CD4-positive, alpha-beta memory T cell (primary cell): ENCODE measurements at regions of chr1 and their contacts with region 1.

Region 1: DNA sequence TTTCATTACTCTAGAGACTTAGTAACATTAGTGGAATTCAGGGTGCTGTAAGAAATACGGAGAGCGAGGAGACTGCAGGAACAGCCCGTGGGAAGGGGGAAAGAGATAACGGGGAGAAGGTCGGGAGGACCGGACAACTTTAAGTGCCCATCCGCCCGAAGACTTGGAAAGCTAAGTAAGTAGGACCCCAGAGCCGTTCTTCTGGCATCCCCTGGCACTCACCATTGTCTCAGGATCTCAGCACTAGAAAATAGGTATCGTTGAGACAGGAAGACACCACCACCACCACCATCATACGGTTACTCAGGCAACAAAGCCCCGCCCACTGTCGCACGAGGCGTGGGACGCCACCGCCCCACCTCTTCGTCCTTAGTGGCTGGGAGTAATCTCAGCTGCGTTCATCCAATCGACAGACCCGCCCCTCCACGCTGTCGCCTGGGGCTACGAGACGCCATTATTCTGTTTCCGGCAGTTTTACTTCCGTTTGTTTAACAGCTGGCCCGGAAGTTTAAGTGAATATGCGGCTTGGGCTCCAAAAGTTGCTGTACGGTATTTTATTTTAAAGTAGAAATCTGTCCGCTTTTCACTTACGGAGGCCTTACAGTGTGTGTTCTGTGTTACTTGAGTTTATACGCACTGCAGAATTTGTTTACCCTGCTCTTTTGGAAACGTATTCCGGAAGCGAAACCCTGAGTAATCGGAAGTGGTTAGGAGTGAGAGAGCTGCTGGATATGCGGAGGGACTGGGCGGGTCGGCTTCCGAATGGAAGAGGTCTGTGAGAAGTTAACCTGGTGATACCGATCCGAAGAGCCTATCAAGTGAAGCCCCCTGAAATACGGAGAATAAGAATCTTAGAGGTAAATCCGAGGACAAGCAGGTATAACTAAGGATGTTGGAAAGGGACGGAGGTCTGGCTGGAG is at the starts of genes BLZF1 and NME7:
- DNase-seq: peak; percentile 95 to 99 (median 98)
- H3K4me3 ChIP-seq: peak within 1 kb of the TSS; percentile 96
- H3K4me3 Mint-ChIP-seq: peak within 1 kb of the TSS in 3 of 8 donors; percentile 16 to 51 (median 24)
- H3K27ac ChIP-seq: peak within 1 kb of the TSS; percentile 71
- H3K27ac Mint-ChIP-seq: peak within 1 kb of the TSS in 3 of 7 donors; percentile 25 to 54 (median 33)
- H3K4me1 ChIP-seq: peaks cover 44% of the 10 kb centered on the region
- H3K4me1 Mint-ChIP-seq: peaks cover 22 to 31% (median 23%) of the 10 kb centered on the region in 4 donors
- H3K27me3 ChIP-seq: no peaks in the 10 kb centered on the region
- H3K27me3 Mint-ChIP-seq: no peaks in the 10 kb centered on the region
- total RNA-seq, gene BLZF1: 20.0 to 23.8 TPM
- total RNA-seq, gene NME7: 12.0 to 14.3 TPM

Region 2: DNA sequence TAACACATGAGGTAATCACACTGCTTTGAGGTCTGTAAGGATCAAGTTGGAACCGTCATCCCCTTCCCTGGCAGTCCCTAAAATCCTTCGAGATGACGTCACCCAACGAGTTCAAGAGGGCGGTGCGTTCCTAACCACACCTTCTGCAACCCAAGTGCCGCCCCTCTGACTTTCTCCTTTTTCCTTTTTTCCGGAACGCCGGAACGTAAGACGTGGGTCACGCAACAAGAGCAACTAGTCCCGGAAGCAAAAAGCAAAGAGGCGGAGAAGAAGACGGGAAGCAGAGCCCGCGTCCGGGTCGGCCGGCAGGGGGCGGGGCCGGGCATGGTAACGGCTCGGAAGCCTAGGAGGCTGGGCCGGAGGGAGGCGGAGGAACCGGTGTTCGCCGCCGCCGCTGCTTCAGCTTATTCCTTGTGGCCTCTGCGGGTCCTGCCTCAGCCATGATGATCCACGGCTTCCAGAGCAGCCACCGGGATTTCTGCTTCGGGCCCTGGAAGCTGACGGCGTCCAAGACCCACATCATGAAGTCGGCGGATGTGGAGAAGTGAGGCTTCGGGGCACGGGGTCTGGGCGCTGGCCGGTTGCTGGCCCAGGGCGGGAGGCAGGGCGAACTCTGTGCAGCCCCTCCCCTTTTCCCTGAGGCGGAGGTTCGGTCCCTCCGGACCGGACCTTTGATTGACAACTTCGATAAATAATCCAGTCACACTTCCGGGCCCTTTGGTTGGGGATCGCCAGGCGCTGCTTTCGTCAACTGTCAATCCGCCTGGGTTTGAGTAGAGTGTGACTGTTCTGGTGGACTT is 1188.9 kb before region 1 on chr1 and contains the start of gene TIPRL:
- CTCF ChIA-PET with region 1: no interaction called
- POLR2A ChIA-PET with region 1: no interaction called
- intact Hi-C with region 1: loop called (anchors 1 kb)
- DNase-seq: peak; percentile 93 to 94 (median 94)
- H3K4me3 ChIP-seq: peak within 1 kb of the TSS; percentile 86 to 99
- H3K4me3 Mint-ChIP-seq: peak within 1 kb of the TSS in 2 of 8 donors; percentile 18 to 26
- H3K27ac ChIP-seq: peak within 1 kb of the TSS; percentile 95
- H3K27ac Mint-ChIP-seq: no peak within 1 kb of the TSS
- H3K4me1 ChIP-seq: peaks cover 24% of the 10 kb centered on the region
- H3K4me1 Mint-ChIP-seq: peaks cover 3 to 17% (median 9%) of the 10 kb centered on the region in 4 donors
- H3K27me3 ChIP-seq: no peaks in the 10 kb centered on the region
- H3K27me3 Mint-ChIP-seq: no peaks in the 10 kb centered on the region
- total RNA-seq, gene TIPRL: 23.8 to 28.3 TPM

Region 3: DNA sequence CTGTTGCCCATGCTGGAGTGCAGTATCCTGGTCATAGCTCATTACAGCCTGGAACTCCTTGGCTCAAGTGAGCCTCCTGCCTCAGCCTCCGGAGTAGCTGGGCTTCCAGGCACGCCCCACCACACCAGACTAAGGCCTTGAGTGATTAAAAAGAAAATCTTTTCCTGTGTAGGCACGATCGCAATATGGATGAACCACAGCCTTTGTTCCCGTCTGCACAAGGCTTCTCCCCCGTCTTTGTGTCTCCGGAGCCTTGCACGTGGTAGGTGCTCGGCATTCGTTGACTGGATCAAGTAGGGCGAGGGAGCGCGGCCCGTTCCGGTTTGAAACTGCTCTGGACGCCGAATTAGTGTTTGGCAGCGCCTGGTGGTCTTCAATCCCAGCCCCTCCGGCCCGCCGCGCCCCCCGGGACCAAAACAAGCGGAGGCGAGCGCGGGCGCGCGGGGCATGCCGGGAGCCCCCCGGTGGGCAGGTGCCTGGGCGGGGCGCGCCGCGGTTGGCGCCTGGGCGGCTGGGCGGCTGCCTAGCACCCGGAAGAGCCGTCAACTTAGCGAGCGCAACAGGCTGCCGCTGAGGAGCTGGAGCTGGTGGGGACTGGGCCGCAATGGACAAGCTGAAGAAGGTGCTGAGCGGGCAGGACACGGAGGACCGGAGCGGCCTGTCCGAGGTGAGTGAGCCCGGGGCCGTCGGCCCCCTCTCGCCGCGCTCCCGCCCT is 1142.1 kb before region 1 on chr1 and contains the start of gene SFT2D2:
- CTCF ChIA-PET with region 1: no interaction called
- POLR2A ChIA-PET with region 1: interaction called, 9 read pairs
- intact Hi-C with region 1: loop called (anchors 5 kb)
- DNase-seq: peak; percentile 78 to 85 (median 81)
- H3K4me3 ChIP-seq: peak within 1 kb of the TSS; percentile 70 to 84
- H3K4me3 Mint-ChIP-seq: peak within 1 kb of the TSS; percentile 95 to 98 (median 96)
- H3K27ac ChIP-seq: peak within 1 kb of the TSS; percentile 80
- H3K27ac Mint-ChIP-seq: peak within 1 kb of the TSS; percentile 87 to 98 (median 96)
- H3K4me1 ChIP-seq: peaks cover 31% of the 10 kb centered on the region
- H3K4me1 Mint-ChIP-seq: peaks cover 25 to 48% (median 38%) of the 10 kb centered on the region in 4 donors
- H3K27me3 ChIP-seq: no peaks in the 10 kb centered on the region
- H3K27me3 Mint-ChIP-seq: peaks cover 2% of the 10 kb centered on the region in 2 donors
- total RNA-seq, gene SFT2D2: 61.7 to 63.2 TPM

Region 4: DNA sequence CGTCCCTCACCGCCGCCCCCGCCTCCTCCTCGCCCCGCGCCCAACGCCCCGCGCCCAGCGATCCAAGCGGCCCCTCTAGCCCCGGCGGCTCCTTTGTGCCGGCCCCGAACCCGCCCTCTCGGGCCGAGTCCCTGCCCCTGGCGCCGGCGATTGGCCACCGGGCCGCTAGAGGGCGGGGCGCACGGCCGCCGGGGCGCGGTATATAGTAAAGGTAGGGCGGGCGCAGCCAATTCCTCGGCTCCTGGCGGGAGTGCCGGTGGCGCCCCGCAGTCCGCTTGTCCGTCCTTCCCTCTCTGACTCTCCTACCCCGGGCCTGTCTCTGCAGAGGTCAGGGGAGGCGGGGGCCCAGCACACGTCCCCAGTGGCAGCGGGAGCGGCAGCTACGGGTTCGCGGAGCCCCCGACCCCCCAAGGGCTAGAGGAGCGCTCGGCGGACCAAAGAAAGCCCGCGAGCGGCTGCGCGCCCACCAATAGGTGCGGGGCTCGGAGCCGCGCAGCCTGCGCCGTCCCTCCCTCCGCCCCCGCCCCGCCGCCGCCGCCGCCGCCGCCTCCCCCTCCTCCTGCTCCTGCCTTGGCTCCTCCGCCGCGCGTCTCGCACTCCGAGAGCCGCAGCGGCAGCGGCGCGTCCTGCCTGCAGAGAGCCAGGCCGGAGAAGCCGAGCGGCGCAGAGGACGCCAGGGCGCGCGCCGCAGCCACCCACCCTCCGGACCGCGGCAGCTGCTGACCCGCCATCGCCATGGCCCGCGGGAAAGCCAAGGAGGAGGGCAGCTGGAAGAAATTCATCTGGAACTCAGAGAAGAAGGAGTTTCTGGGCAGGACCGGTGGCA is 261.4 kb before region 1 on chr1 and contains the start of gene ATP1B1:
- CTCF ChIA-PET with region 1: no interaction called
- POLR2A ChIA-PET with region 1: no interaction called
- intact Hi-C with region 1: loop called (anchors 5 kb)
- DNase-seq: peak; percentile 72 to 84 (median 78)
- H3K4me3 ChIP-seq: peak within 1 kb of the TSS; percentile 57 to 70
- H3K4me3 Mint-ChIP-seq: peak within 1 kb of the TSS; percentile 78 to 97 (median 90)
- H3K27ac ChIP-seq: peak within 1 kb of the TSS; percentile 23
- H3K27ac Mint-ChIP-seq: peak within 1 kb of the TSS; percentile 58 to 88 (median 78)
- H3K4me1 ChIP-seq: peaks cover 27% of the 10 kb centered on the region
- H3K4me1 Mint-ChIP-seq: peaks cover 20 to 49% (median 34%) of the 10 kb centered on the region in 4 donors
- H3K27me3 ChIP-seq: no peaks in the 10 kb centered on the region
- H3K27me3 Mint-ChIP-seq: peaks cover 2 to 4% of the 10 kb centered on the region in 2 donors
- total RNA-seq, gene ATP1B1: 3.3 to 3.5 TPM

Region 5: DNA sequence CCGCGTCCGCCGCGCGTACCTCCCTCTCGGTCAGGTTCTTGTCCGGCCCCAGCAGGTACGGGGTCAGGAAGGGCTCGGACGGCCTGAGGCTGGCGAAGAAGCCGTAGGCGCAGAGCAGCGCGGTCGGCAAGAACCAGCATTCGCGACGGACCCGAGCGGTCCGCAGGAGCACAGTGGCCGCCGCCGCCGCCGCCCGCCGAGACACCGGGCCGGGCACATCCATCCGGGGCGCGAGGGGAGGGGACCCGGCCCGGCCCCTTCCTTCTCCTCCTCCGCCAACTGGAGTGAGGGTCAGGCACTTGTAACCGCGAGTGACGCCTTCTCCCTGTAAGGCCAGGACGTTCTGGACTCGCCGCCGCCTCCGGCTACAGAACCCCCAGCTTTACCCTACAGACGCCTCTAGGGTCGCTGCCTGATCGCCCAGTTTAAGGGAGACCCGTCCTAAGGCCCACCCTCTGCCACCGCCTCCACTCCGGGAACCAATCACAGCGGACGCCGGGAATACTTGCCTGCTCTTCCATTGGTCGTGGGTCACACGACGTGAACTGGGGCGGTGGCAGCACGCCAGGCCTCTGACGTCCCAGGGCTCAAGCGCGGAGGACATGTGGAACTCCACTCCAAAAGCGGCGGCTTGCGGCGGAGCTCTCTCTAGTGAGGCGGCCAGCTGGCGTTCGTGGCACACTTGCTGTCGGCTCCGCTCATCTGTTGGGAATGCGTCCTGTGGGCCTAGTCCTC is 118.0 kb after region 1 on chr1 and contains the start of gene SLC19A2:
- CTCF ChIA-PET with region 1: no interaction called
- POLR2A ChIA-PET with region 1: interaction called, 12 read pairs
- intact Hi-C with region 1: loop called (anchors 1 kb)
- DNase-seq: peak; percentile 89 to 96 (median 91)
- H3K4me3 ChIP-seq: peak within 1 kb of the TSS; percentile 60 to 63
- H3K4me3 Mint-ChIP-seq: peak within 1 kb of the TSS; percentile 93 to 97 (median 95)
- H3K27ac ChIP-seq: peak within 1 kb of the TSS; percentile 73
- H3K27ac Mint-ChIP-seq: peak within 1 kb of the TSS; percentile 88 to 96 (median 94)
- H3K4me1 ChIP-seq: peaks cover 20% of the 10 kb centered on the region
- H3K4me1 Mint-ChIP-seq: peaks cover 28 to 37% (median 30%) of the 10 kb centered on the region in 4 donors
- H3K27me3 ChIP-seq: no peaks in the 10 kb centered on the region
- H3K27me3 Mint-ChIP-seq: no peaks in the 10 kb centered on the region
- total RNA-seq, gene SLC19A2: 4.1 to 4.5 TPM

Region 6: GRCh38 chr1:170074250-170075157 is 706.8 kb after region 1 on chr1 and contains the start of gene KIFAP3:
- CTCF ChIA-PET with region 1: no interaction called
- POLR2A ChIA-PET with region 1: interaction called, 3 read pairs
- intact Hi-C with region 1: loop called (anchors 1 kb)
- DNase-seq: peak; percentile 93 to 97 (median 95)
- H3K4me3 ChIP-seq: peak within 1 kb of the TSS; percentile 71 to 77
- H3K4me3 Mint-ChIP-seq: peak within 1 kb of the TSS; percentile 90 to 98 (median 96)
- H3K27ac ChIP-seq: peak within 1 kb of the TSS; percentile 74
- H3K27ac Mint-ChIP-seq: peak within 1 kb of the TSS; percentile 85 to 99 (median 97)
- H3K4me1 ChIP-seq: peaks cover 44% of the 10 kb centered on the region
- H3K4me1 Mint-ChIP-seq: peaks cover 39 to 61% (median 47%) of the 10 kb centered on the region in 4 donors
- H3K27me3 ChIP-seq: no peaks in the 10 kb centered on the region
- H3K27me3 Mint-ChIP-seq: peaks cover 0 to 2% of the 10 kb centered on the region in 2 donors
- total RNA-seq, gene KIFAP3: 20.2 to 22.2 TPM